Upper lobe of right lung (tissue), 1 donor: ENCODE measurements at regions of chr10 and their contacts with region 1.

Region 1: DNA sequence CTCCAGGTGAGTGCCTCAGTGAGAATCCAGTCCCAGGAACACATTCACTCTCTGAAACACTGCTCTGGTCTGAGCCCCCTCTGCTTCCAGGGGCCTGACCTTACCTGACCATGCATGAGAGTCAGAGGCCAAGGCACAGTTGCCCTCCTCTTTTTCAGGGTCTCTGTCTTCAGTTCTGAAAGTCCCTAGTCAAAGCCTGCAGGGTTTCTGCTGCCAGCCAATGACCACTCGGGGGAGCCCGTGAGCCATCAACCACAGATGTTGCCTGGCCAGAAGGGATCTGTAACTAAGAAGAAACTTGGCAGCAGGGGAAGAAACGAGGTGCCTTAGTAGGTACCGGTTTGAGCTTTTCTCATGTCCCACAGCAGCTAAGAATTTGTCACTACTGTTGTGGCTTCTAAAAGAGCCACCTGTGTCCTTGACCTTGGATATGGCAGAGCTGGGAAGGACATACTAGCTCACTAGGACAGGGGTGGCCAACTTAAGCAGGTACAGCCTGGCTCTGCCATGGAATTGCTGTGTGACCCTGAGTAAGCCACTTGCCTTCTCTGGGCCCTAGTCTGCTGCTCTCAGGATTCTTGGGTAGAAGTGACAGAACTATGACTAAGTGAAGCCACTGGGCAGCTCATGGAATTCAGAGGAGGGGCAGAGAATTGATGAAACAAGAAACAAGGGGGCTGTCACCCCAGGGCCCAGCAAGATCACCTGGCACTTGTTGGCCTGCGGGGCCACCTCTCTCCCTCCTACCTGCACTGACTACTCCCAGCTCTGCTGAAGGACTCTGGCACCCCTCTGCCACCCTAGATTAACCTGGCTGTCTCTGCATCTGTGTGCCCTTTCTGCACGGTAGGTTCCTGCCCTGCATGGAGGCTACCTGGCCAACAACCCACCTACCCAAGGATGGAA is 83.8 kb upstream of the GPR26 start:
- DNase-seq: peak; percentile 85
- ATAC-seq: peak; percentile 78
- H3K4me3 ChIP-seq: no peak overlapping the region
- H3K27ac ChIP-seq: no peak overlapping the region
- H3K4me1 ChIP-seq: no peaks in the 10 kb centered on the region
- H3K27me3 ChIP-seq: peaks cover 25% of the 10 kb centered on the region
- CTCF ChIP-seq: peak; percentile 77

Region 2: GRCh38 chr10:123800289-123800688 is 218.0 kb after region 1 on chr10:
- intact Hi-C with region 1: no loop called
- DNase-seq: no peak
- ATAC-seq: no peak
- H3K4me3 ChIP-seq: no peak overlapping the region
- H3K27ac ChIP-seq: no peak overlapping the region
- H3K4me1 ChIP-seq: no peaks in the 10 kb centered on the region
- H3K27me3 ChIP-seq: no peaks in the 10 kb centered on the region
- CTCF ChIP-seq: no peak

Region 3: GRCh38 chr10:123967396-123968243 is 385.3 kb after region 1 on chr10:
- intact Hi-C with region 1: loop called (anchors 2 kb)
- DNase-seq: peak; percentile 82
- ATAC-seq: peak; percentile 79
- H3K4me3 ChIP-seq: no peak overlapping the region
- H3K27ac ChIP-seq: no peak overlapping the region
- H3K4me1 ChIP-seq: no peaks in the 10 kb centered on the region
- H3K27me3 ChIP-seq: peaks cover 48% of the 10 kb centered on the region
- CTCF ChIP-seq: peak; percentile 88